Gastrocnemius medialis (tissue), 4 donors: ENCODE measurements at regions of chr9 and their contacts with region 1.

Region 1: GRCh38 chr9:137067860-137068538 is 2.4 kb downstream of the SAPCD2 start:
- DNase-seq: peak; percentile 39 to 68
- ATAC-seq: peak in 1 of 2 donors; percentile 59
- H3K4me3 ChIP-seq: no peak overlapping the region
- H3K27ac ChIP-seq: no peak overlapping the region
- H3K4me1 ChIP-seq: peaks cover 9 to 15% of the 10 kb centered on the region in 2 donors
- H3K27me3 ChIP-seq: peaks cover 0 to 11% (median 5%) of the 10 kb centered on the region in 3 donors
- CTCF ChIP-seq: peak; percentile 50 to 83 (median 76)
- POLR2A ChIP-seq: no peak

Region 2: GRCh38 chr9:137007108-137007815 is 60.7 kb before region 1 on chr9:
- in situ Hi-C with region 1: no loop called
- intact Hi-C with region 1: no loop called
- DNase-seq: no peak
- ATAC-seq: no peak
- H3K4me3 ChIP-seq: no peak overlapping the region
- H3K27ac ChIP-seq: no peak overlapping the region
- H3K4me1 ChIP-seq: no peaks in the 10 kb centered on the region
- H3K27me3 ChIP-seq: no peaks in the 10 kb centered on the region
- CTCF ChIP-seq: no peak
- POLR2A ChIP-seq: no peak

Region 3: DNA sequence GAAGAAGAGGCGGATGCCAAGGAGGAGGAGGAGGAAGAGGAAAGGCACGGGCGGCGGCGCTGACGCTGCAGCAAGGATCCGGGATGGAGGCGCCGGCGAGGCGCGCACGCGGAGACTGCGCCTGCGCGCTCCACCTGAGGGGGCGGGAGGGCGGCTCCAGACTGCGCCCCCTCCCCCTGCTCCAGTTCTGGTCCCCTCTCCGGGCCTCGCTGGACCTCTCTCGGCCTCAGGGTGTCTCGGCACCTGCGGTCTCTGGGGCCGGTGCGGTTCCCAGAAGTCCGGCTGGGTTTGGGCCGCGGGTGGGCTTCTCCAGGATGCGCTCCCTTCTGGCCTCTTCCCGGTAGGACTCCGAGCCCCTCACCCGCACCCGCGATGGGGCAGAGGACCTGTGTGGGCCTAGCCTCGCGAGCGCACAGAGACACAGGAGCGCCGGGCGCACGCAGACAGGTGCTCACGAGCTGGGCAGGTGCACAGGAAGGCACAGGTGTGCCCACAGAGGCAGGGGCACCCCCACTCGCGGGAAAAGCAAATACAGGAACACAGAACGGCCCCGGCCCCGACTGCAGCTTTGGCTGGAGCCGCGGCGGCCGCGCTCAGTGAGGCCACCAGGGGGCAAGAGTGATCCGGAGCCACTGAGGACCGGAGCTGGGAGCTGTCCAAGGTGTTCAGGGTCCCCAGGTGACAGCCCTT is 21.8 kb before region 1 on chr9 and contains the start of gene NPDC1:
- in situ Hi-C with region 1: no loop called
- intact Hi-C with region 1: loop called (anchors 2 kb)
- DNase-seq: no peak
- ATAC-seq: peak; percentile 43 to 49
- H3K4me3 ChIP-seq: peak within 1 kb of the TSS; percentile 58 to 83 (median 64)
- H3K27ac ChIP-seq: peak within 1 kb of the TSS; percentile 30 to 74 (median 66)
- H3K4me1 ChIP-seq: peaks cover 5 to 34% of the 10 kb centered on the region in 2 donors
- H3K27me3 ChIP-seq: peaks cover 19 to 37% (median 37%) of the 10 kb centered on the region in 3 donors
- CTCF ChIP-seq: peak; percentile 51 to 82 (median 77)
- POLR2A ChIP-seq: no peak
- total RNA-seq, gene NPDC1: 11.3 to 22.3 (median 19.0) TPM

Region 4: GRCh38 chr9:137924761-137925369 is 856.9 kb after region 1 on chr9:
- in situ Hi-C with region 1: no loop called
- intact Hi-C with region 1: no loop called
- DNase-seq: no peak
- ATAC-seq: no peak
- H3K4me3 ChIP-seq: no peak overlapping the region
- H3K27ac ChIP-seq: no peak overlapping the region
- H3K4me1 ChIP-seq: no peaks in the 10 kb centered on the region
- H3K27me3 ChIP-seq: peaks cover 0 to 6% (median 0%) of the 10 kb centered on the region in 3 donors
- CTCF ChIP-seq: no peak
- POLR2A ChIP-seq: no peak